Caco-2 (cell line): ENCODE measurements at regions of chr6 and their contacts with region 1.

Region 1: DNA sequence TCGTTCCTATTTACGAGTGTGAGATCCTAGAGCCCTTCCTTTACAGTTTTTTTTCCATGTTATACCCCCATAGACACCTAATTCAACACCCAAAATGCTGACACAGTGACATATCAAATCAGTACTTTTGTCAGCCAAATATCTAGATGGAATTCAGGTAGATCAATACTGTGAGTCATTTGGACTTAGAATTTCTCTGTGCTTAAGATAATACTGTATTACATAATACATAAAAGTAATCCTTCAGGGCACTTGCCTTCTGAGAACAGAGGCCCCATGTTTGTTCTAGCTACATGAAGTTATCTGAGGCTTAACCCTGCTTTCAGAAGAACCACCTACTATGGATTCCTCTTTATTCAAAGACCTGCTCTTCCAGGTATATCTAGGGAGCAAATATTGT is 623.1 kb downstream of the PHF3 start:
- DNase-seq: peak; percentile 56 to 72
- H3K4me3 ChIP-seq: no peak overlapping the region
- H3K4me3 Mint-ChIP-seq: peak overlapping the region; percentile 46
- H3K27ac Mint-ChIP-seq: peak overlapping the region; percentile 10
- H3K4me1 ChIP-seq: peaks cover 46% of the 10 kb centered on the region
- H3K4me1 Mint-ChIP-seq: peaks cover 53% of the 10 kb centered on the region
- H3K27me3 ChIP-seq: no peaks in the 10 kb centered on the region
- H3K27me3 Mint-ChIP-seq: no peaks in the 10 kb centered on the region
- CTCF ChIP-seq: no peak

Region 2: DNA sequence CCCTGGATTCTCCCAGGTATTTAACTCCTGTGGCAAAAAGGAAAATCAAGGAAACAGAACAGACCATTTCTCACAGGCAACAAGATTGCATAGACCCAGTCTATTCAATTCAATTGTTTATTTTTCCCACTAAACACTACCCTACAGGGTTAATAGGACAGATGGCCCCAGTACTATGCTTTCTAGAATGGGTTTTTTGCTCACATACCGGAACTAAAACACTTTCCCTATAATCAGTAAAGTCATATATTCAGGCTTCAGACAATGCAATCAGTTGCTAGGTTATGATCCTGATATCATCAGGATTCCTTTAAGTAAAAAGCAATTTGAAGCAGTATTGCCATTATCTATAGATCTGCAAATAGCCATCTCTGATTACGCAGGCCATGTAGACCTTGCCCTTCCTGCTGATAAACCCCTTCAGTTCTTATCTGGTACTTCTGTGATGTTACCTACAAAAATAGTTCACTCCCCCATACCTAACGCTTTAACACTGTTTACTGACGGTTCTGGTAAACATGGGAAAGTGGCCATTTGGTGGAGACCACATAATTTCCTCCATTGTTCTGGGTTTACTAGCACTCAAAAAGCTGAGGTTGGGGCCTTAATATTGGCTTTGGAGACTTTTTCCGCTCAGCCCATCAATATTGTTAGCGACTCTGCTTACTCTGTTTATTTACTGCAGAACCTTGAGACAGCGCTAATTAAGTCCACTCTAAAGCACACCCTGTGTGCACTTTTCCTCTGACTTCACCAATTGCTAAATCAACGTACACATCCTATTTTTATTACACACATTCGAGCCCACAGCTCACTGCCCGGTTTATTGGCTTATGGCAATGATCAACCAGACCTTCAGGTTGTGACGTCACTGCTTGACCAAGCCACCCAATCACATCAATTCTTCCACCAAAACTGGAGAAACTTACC is 42.8 kb after region 1 on chr6:
- CTCF ChIA-PET with region 1: no interaction called
- POLR2A ChIA-PET with region 1: no interaction called
- intact Hi-C with region 1: loop called (anchors 1 kb)
- DNase-seq: peak; percentile 66 to 70
- H3K4me3 ChIP-seq: no peak overlapping the region
- H3K4me3 Mint-ChIP-seq: peak overlapping the region; percentile 27
- H3K27ac Mint-ChIP-seq: peak overlapping the region; percentile 50
- H3K4me1 ChIP-seq: peaks cover 21% of the 10 kb centered on the region
- H3K4me1 Mint-ChIP-seq: peaks cover 13% of the 10 kb centered on the region
- H3K27me3 ChIP-seq: no peaks in the 10 kb centered on the region
- H3K27me3 Mint-ChIP-seq: no peaks in the 10 kb centered on the region
- CTCF ChIP-seq: no peak